Activated CD8-positive, alpha-beta T cell treated with anti-CD3 and anti-CD28 coated beads, Interleukin-2, amount 10 ng/mL, durations not matched to agents 7 days and 5 days (primary cell): ENCODE measurements at regions of chr3 and their contacts with region 1.

Region 1: GRCh38 chr3:42547401-42547945 is 34.3 kb downstream of the SEC22C start:
- DNase-seq: peak; percentile 72
- ATAC-seq: peak; percentile 87
- H3K4me3 Mint-ChIP-seq: no peak overlapping the region
- H3K27ac Mint-ChIP-seq: no peak overlapping the region
- H3K4me1 Mint-ChIP-seq: no peaks in the 10 kb centered on the region
- H3K27me3 Mint-ChIP-seq: no peaks in the 10 kb centered on the region

Region 2: GRCh38 chr3:42247576-42248027 is 299.9 kb before region 1 on chr3:
- CTCF ChIA-PET with region 1: interaction called, 16 read pairs
- POLR2A ChIA-PET with region 1: no interaction called
- DNase-seq: peak; percentile 72
- ATAC-seq: peak; percentile 67
- H3K4me3 Mint-ChIP-seq: no peak overlapping the region
- H3K27ac Mint-ChIP-seq: no peak overlapping the region
- H3K4me1 Mint-ChIP-seq: peaks cover 4% of the 10 kb centered on the region
- H3K27me3 Mint-ChIP-seq: peaks cover 32% of the 10 kb centered on the region

Region 3: GRCh38 chr3:42502429-42503250 is 44.8 kb before region 1 on chr3 and contains the start of gene VIPR1:
- CTCF ChIA-PET with region 1: interaction called, 183 read pairs
- POLR2A ChIA-PET with region 1: interaction called, 3 read pairs
- DNase-seq: peak; percentile 91
- ATAC-seq: peak; percentile 97
- H3K4me3 Mint-ChIP-seq: peak within 1 kb of the TSS; percentile 86
- H3K27ac Mint-ChIP-seq: peak within 1 kb of the TSS; percentile 41
- H3K4me1 Mint-ChIP-seq: peaks cover 35% of the 10 kb centered on the region
- H3K27me3 Mint-ChIP-seq: peaks cover 28% of the 10 kb centered on the region
- total RNA-seq, gene VIPR1: 9.1 to 9.5 TPM

Region 4: GRCh38 chr3:42518800-42519567 is 28.5 kb before region 1 on chr3:
- CTCF ChIA-PET with region 1: interaction called, 11 read pairs
- POLR2A ChIA-PET with region 1: no interaction called
- DNase-seq: peak; percentile 68
- ATAC-seq: peak; percentile 52
- H3K4me3 Mint-ChIP-seq: no peak overlapping the region
- H3K27ac Mint-ChIP-seq: peak overlapping the region; percentile 43
- H3K4me1 Mint-ChIP-seq: peaks cover 17% of the 10 kb centered on the region
- H3K27me3 Mint-ChIP-seq: no peaks in the 10 kb centered on the region

Region 5: DNA sequence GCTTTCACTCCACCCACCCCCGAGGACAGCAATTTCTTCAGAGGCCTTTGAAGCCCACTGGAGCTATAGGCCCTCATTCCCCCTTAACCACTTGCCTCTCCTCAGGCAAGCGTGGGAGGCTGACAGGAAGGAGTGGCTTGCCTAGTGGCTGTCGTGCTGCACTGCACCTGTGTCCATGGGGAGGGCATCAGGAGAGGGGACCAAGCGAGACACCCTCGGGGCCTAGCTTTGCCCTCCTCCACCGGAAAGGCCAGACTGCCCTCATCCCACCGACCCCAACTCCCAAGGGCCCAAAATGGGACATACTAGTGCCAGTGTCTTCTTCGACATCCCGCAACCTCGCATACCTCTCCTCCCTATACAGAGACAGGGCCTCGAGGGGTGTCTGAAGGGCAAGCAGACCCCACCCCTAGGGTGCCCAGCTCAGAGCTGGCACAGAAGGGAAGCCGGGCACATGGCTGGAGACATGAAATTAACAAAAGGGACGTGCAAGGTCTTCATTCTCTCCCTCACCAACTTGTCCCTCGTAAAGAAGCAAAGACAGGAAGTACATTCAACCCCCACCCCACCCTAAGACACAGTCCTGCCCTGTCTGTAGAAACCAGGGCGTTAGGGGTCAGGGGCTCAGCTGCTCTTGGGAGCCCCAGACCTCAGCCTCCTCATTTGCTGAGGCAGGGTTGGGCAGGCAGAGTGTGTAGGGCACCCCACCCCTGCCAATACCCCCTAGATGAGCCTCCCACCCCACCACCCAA is 20.7 kb before region 1 on chr3:
- CTCF ChIA-PET with region 1: interaction called, 15 read pairs
- POLR2A ChIA-PET with region 1: interaction called, 3 read pairs
- DNase-seq: peak; percentile 59
- ATAC-seq: peak; percentile 84
- H3K4me3 Mint-ChIP-seq: peak overlapping the region; percentile 50
- H3K27ac Mint-ChIP-seq: peak overlapping the region; percentile 92
- H3K4me1 Mint-ChIP-seq: peaks cover 56% of the 10 kb centered on the region
- H3K27me3 Mint-ChIP-seq: no peaks in the 10 kb centered on the region

Region 6: GRCh38 chr3:42557849-42558248 is 10.4 kb after region 1 on chr3:
- CTCF ChIA-PET with region 1: interaction called, 14 read pairs
- POLR2A ChIA-PET with region 1: no interaction called
- DNase-seq: peak; percentile 43
- ATAC-seq: no peak
- H3K4me3 Mint-ChIP-seq: no peak overlapping the region
- H3K27ac Mint-ChIP-seq: peak overlapping the region; percentile 55
- H3K4me1 Mint-ChIP-seq: peaks cover 27% of the 10 kb centered on the region
- H3K27me3 Mint-ChIP-seq: no peaks in the 10 kb centered on the region

Region 7: GRCh38 chr3:42569593-42570142 is 22.2 kb after region 1 on chr3:
- CTCF ChIA-PET with region 1: no interaction called
- POLR2A ChIA-PET with region 1: no interaction called
- DNase-seq: peak; percentile 13
- ATAC-seq: no peak
- H3K4me3 Mint-ChIP-seq: no peak overlapping the region
- H3K27ac Mint-ChIP-seq: no peak overlapping the region
- H3K4me1 Mint-ChIP-seq: peaks cover 6% of the 10 kb centered on the region
- H3K27me3 Mint-ChIP-seq: no peaks in the 10 kb centered on the region

Region 8: DNA sequence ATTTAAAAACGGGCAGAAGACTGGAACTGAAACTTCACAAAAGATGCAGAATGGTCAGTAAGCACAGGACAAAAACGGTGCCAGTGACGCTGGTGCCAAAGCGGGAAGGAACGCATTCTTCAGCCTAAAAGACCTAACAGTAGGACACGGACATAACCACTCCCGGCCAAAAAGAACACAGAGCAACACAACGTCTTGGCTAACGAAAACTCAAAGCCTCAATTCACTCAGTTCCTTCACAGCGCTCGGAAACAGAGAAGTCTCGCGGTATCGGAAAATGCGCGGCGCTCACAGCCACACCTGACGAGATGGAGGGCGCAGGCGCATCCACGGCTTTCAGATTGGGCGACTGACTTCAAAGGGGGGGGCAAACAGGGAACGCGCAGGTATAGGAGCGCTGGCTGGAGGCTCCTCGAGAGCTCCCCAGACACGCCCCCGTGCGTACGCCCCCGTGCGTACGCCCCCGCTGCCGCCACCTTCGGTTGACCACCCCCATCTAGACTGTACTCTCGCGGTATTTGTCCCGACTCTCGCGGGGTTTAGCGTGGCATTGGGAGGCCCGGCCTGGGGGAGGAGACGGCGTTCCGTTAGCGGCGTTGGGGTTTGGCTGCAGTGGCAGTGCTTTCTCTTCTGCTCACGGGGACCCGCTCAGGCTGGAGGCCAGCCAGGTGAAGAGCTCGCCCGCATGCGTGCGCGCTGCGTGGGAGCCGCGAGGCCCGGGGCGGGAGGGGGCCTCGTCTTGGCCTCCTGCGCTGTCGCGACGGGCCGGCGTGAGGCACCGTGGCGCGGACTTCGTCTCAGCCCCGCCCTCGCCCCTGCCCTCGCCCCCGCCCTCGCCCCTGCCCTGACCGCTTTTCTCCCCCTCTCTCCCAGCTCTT is 52.9 kb after region 1 on chr3 and contains the start of gene NKTR:
- CTCF ChIA-PET with region 1: interaction called, 13 read pairs
- POLR2A ChIA-PET with region 1: no interaction called
- DNase-seq: peak; percentile 99
- ATAC-seq: peak; percentile 91
- H3K4me3 Mint-ChIP-seq: peak within 1 kb of the TSS; percentile 94
- H3K27ac Mint-ChIP-seq: peak within 1 kb of the TSS; percentile 99
- H3K4me1 Mint-ChIP-seq: peaks cover 31% of the 10 kb centered on the region
- H3K27me3 Mint-ChIP-seq: no peaks in the 10 kb centered on the region
- total RNA-seq, gene NKTR: 85.9 to 90.3 TPM